Activated CD4-positive, alpha-beta memory T cell treated with anti-CD3 and anti-CD28 coated beads for 36 hours (primary cell): ENCODE measurements at regions of chr4 and their contacts with region 1.

Region 1: GRCh38 chr4:16916719-16917337 is 18.4 kb upstream of the LDB2 start:
- DNase-seq: peak; percentile 82
- H3K4me3 Mint-ChIP-seq: no peak overlapping the region
- H3K27ac Mint-ChIP-seq: no peak overlapping the region
- H3K4me1 Mint-ChIP-seq: no peaks in the 10 kb centered on the region
- H3K27me3 Mint-ChIP-seq: no peaks in the 10 kb centered on the region

Region 2: GRCh38 chr4:16794816-16795445 is 121.9 kb before region 1 on chr4:
- CTCF ChIA-PET with region 1: interaction called, 4 read pairs
- POLR2A ChIA-PET with region 1: no interaction called
- intact Hi-C with region 1: loop called (anchors 2 kb)
- DNase-seq: peak; percentile 33
- H3K4me3 Mint-ChIP-seq: no peak overlapping the region
- H3K27ac Mint-ChIP-seq: no peak overlapping the region
- H3K4me1 Mint-ChIP-seq: no peaks in the 10 kb centered on the region
- H3K27me3 Mint-ChIP-seq: no peaks in the 10 kb centered on the region

Region 3: GRCh38 chr4:16843831-16844508 is 72.9 kb before region 1 on chr4:
- CTCF ChIA-PET with region 1: no interaction called
- POLR2A ChIA-PET with region 1: no interaction called
- intact Hi-C with region 1: no loop called
- DNase-seq: no peak
- H3K4me3 Mint-ChIP-seq: no peak overlapping the region
- H3K27ac Mint-ChIP-seq: no peak overlapping the region
- H3K4me1 Mint-ChIP-seq: no peaks in the 10 kb centered on the region
- H3K27me3 Mint-ChIP-seq: no peaks in the 10 kb centered on the region